Activated B cell treated with CpG ODN at 0.5 μM for 24 hours (primary cell): ENCODE measurements at regions of chr1 and their contacts with region 1.

Region 1: GRCh38 chr1:113811888-113812660 is at the start of gene RSBN1:
- DNase-seq: peak; percentile 95
- ATAC-seq: peak; percentile 94
- H3K4me3 Mint-ChIP-seq: peak within 1 kb of the TSS; percentile 94
- H3K27ac Mint-ChIP-seq: peak within 1 kb of the TSS; percentile 93
- H3K4me1 Mint-ChIP-seq: peaks cover 41% of the 10 kb centered on the region
- H3K27me3 Mint-ChIP-seq: no peaks in the 10 kb centered on the region
- CTCF ChIP-seq: no peak
- total RNA-seq, gene RSBN1: 26.4 and 29.1 TPM in 2 replicates

Region 2: DNA sequence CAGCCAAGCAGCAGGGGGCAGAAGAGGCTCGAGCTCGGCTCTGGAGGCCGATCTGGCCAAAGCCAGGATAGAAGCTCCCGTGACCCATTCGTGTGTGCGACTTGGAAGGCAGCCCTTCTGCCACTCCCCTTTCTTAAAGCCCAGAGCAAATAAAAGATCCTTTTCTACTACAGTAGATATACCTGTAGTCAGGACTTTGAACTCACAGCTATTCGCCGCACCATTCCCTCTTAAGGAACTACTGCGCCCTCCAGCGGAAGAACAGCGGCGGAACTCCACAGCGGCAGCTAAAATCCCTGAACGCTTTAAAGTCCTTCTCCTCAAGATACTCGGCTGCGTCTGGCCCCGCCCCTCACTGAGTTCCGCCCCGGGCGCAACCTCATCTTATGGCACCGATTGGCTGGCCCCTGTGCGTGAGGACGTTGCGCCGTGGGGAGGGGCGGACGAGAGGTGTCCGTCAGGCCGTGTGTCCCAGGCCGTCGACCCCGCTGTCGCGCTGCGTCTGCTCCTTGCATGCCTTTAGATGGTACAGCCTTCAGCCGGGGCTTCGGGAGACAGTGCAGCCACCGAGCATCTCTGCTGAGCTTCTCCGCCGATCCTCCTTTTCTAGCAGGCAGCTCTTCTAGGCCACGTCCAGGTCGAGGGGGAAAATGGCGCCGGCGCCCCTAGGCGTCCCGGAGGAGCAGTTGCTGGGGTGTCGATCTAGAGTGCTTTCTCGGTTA is 739.2 kb before region 1 on chr1 and contains the start of gene LRIG2:
- CTCF ChIA-PET with region 1: no interaction called
- POLR2A ChIA-PET with region 1: interaction called, 3 read pairs
- intact Hi-C with region 1: loop called (anchors 2 kb)
- DNase-seq: peak; percentile 96
- ATAC-seq: peak; percentile 96
- H3K4me3 Mint-ChIP-seq: peak within 1 kb of the TSS; percentile 95
- H3K27ac Mint-ChIP-seq: peak within 1 kb of the TSS; percentile 95
- H3K4me1 Mint-ChIP-seq: peaks cover 31% of the 10 kb centered on the region
- H3K27me3 Mint-ChIP-seq: no peaks in the 10 kb centered on the region
- CTCF ChIP-seq: peak; percentile 49
- total RNA-seq, gene LRIG2: 23.8 and 30.7 TPM in 2 replicates

Region 3: GRCh38 chr1:113660088-113660487 is 152.0 kb before region 1 on chr1:
- CTCF ChIA-PET with region 1: no interaction called
- POLR2A ChIA-PET with region 1: no interaction called
- intact Hi-C with region 1: no loop called
- DNase-seq: no peak
- ATAC-seq: no peak
- H3K4me3 Mint-ChIP-seq: no peak overlapping the region
- H3K27ac Mint-ChIP-seq: no peak overlapping the region
- H3K4me1 Mint-ChIP-seq: no peaks in the 10 kb centered on the region
- H3K27me3 Mint-ChIP-seq: no peaks in the 10 kb centered on the region
- CTCF ChIP-seq: no peak

Region 4: DNA sequence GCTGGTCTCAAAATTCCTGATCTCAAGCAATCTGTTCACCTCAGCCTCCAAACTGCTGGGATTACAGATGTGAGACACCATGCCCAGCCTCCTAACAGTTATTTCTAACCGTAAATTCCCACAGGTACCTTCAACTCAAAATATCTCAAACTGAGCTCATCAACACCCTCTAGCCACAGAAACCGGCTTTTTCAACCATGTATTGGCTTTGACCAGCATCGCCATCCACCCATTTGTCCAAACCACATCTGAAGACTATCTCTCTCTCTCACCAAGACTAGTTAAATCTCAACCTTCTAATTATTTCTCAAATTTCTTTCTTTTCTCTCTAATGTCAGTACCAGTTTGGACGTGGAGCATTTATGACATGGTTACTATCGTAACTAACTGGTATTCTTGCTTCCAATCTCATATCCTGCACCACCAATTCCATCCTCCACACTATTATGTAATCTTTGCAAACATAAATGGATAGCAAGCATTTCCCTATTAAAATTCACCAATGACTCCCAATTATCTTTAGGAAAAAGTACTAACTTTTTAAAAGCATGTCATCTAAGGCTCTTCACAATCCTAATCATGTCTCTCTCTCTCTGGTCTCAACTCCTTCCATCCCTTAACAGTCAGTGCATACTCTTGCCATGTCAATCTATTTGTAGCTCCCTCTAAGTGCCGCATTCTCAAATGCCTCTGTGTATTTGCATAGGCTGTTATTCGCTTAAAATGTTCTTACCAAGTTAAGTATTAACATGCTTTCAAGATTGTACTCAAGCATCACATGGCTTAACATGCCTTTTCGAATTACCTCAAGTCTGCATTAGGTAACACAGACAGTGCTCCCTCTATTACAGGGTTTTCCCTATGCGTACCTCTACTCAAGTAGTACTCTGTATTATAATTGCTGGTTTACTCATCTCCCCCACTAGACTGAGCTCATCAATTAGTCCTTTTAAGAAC is 17.9 kb before region 1 on chr1:
- CTCF ChIA-PET with region 1: no interaction called
- POLR2A ChIA-PET with region 1: interaction called, 4 read pairs
- intact Hi-C with region 1: loop called (anchors 2 kb)
- DNase-seq: no peak
- ATAC-seq: no peak
- H3K4me3 Mint-ChIP-seq: no peak overlapping the region
- H3K27ac Mint-ChIP-seq: no peak overlapping the region
- H3K4me1 Mint-ChIP-seq: peaks cover 27% of the 10 kb centered on the region
- H3K27me3 Mint-ChIP-seq: no peaks in the 10 kb centered on the region
- CTCF ChIP-seq: no peak

Region 5: DNA sequence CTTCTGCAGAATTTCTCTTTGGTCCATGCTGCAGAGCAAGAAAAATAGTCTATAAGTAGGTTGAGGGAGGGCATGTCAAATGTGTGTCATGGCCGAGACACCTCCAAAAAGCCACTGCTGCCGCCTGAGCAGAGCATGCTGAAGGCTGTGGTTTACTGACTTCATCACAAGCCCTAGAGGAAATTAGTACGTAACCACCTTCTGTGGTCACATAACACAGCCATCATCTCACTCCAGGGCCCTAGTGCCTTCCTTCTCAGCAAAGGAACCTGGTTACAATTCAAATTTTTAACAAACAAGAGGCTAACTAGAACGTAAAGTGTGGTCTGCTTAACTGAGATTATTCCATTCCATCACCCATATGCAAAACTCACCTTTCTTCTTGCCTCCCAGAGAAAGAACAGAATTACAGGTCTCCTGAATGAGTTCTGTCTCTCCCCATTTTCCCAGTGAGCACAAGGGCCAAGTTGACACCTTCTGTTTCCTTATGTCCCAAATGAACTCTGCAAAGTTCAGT is 59.6 kb after region 1 on chr1 and contains the start of gene PTPN22:
- CTCF ChIA-PET with region 1: no interaction called
- POLR2A ChIA-PET with region 1: interaction called, 5 read pairs
- intact Hi-C with region 1: loop called (anchors 1 kb)
- DNase-seq: peak; percentile 39
- ATAC-seq: peak; percentile 96
- H3K4me3 Mint-ChIP-seq: peak within 1 kb of the TSS; percentile 85
- H3K27ac Mint-ChIP-seq: peak within 1 kb of the TSS; percentile 95
- H3K4me1 Mint-ChIP-seq: peaks cover 77% of the 10 kb centered on the region
- H3K27me3 Mint-ChIP-seq: no peaks in the 10 kb centered on the region
- CTCF ChIP-seq: no peak
- total RNA-seq, gene PTPN22: 25.5 and 26.1 TPM in 2 replicates

Region 6: GRCh38 chr1:114581335-114582287 is 769.5 kb after region 1 on chr1 and contains the start of gene BCAS2:
- CTCF ChIA-PET with region 1: no interaction called
- POLR2A ChIA-PET with region 1: no interaction called
- intact Hi-C with region 1: loop called (anchors 5 kb)
- DNase-seq: peak; percentile 81
- ATAC-seq: peak; percentile 97
- H3K4me3 Mint-ChIP-seq: peak within 1 kb of the TSS; percentile 99
- H3K27ac Mint-ChIP-seq: peak within 1 kb of the TSS; percentile 98
- H3K4me1 Mint-ChIP-seq: peaks cover 29% of the 10 kb centered on the region
- H3K27me3 Mint-ChIP-seq: peaks cover 2% of the 10 kb centered on the region
- CTCF ChIP-seq: no peak
- total RNA-seq, gene BCAS2: 33.1 and 36.3 TPM in 2 replicates